Heart left ventricle (tissue), 16 donors: ENCODE measurements at regions of chr15 and their contacts with region 1.

Region 1: DNA sequence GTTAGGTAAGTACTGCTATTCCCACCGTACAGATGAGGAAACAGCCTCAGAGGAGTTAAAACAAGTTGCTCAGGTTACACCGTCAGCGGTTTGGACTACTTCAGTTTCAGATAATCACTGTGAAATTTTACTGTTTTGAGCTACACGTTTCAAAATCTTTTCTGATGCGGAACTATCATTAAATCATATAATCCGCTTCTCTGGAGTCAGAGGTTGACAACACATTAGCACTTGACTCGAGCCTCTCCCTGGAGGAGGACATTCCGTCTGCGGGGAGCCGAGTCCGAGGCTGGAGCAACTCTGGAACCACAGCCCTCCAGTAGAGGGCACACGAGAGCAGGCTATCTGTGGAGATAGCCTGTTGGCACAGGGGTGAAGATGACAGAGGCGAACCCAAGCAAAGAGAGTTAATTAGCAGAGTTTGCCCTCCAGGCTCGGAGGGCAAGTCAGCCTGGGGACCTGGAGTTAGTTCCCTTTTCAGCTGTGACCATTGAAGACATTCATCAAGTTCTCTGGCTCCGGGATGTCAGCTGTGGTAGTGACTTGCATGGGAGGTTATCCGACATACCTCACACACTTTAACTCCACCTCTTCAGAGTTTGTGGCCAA is 131.2 kb downstream of the IGF1R start:
- DNase-seq: peak; percentile 73 to 89 (median 83)
- ATAC-seq: peak; percentile 68 to 91 (median 88)
- H3K4me3 ChIP-seq: no peak overlapping the region
- H3K27ac ChIP-seq: peak overlapping the region in 7 of 12 donors; percentile 13 to 67 (median 30)
- H3K4me1 ChIP-seq: peaks cover 0 to 53% (median 30%) of the 10 kb centered on the region in 12 donors
- H3K27me3 ChIP-seq: no peaks in the 10 kb centered on the region
- CTCF ChIP-seq: peak; percentile 81 to 95 (median 92)
- POLR2A ChIP-seq: no peak

Region 2: DNA sequence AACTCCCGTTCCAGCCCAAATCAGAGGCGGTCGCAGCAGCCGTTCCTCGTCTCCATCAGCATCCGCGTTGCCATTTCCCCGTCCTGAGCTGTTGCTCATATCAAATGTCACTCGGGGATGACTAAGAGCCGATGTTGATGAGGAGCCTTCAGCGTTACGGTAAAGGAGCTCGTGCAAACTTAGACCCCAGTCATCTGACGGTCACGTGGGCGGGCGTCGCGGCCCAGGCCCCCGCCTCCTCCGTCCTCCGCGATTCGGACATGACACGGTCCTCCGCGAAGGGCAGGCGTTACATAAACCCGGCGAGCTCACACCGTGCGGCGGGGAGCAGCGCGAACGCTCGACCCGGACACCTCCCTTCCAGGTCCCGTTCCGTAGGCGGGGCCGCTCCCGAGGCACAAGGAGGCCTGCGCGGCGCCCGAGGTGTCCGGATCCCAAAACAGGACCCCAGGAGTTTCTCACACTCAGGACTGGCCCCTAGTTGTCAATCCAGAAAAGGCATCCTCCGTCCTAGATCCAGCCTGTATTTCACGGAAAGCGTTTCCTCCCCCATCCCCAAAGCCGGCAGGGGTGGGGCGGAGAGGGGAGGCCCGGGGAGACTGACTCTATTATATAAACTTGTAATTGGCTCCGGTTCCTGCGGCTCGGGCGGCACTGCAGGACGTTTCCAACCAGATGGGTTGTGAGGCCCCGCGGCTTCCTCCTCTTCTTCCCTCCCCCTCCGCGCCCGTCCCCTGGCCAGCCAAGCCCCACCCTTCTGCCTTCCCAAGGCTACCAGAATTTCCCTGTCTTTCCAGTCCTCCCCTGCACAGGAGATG is 231.2 kb before region 1 on chr15:
- intact Hi-C with region 1: no loop called
- DNase-seq: peak; percentile 68 to 84 (median 73)
- ATAC-seq: peak; percentile 75 to 92 (median 90)
- H3K4me3 ChIP-seq: peak overlapping the region; percentile 15 to 66 (median 56)
- H3K27ac ChIP-seq: peak overlapping the region in 11 of 12 donors; percentile 22 to 89 (median 71)
- H3K4me1 ChIP-seq: peaks cover 0 to 22% (median 9%) of the 10 kb centered on the region in 12 donors
- H3K27me3 ChIP-seq: peaks cover 0 to 24% (median 10%) of the 10 kb centered on the region in 9 donors
- CTCF ChIP-seq: peak in 4 of 12 donors; percentile 4 to 38 (median 32)
- POLR2A ChIP-seq: no peak

Region 3: GRCh38 chr15:98647774-98648653 is 131.6 kb before region 1 on chr15 and contains the start of gene IGF1R:
- intact Hi-C with region 1: loop called in 8 of 10 experiments (anchors 2 to 5 kb)
- DNase-seq: peak; percentile 88 to 94 (median 91)
- ATAC-seq: peak; percentile 46 to 89 (median 76)
- H3K4me3 ChIP-seq: peak within 1 kb of the TSS; percentile 68 to 93 (median 86)
- H3K27ac ChIP-seq: peak within 1 kb of the TSS; percentile 90 to 97 (median 94)
- H3K4me1 ChIP-seq: peaks cover 0 to 36% (median 19%) of the 10 kb centered on the region in 12 donors
- H3K27me3 ChIP-seq: peaks cover 0 to 68% (median 17%) of the 10 kb centered on the region in 9 donors
- CTCF ChIP-seq: peak in 5 of 12 donors; percentile 2 to 44 (median 19)
- POLR2A ChIP-seq: peak; percentile 35 to 54
- total RNA-seq, gene IGF1R: 26.0 to 93.1 (median 47.5) TPM

Region 4: GRCh38 chr15:98705061-98705460 is 74.5 kb before region 1 on chr15:
- intact Hi-C with region 1: loop called in 1 of 10 experiments (anchors 5 kb)
- DNase-seq: no peak
- ATAC-seq: peak in 2 of 4 donors; percentile 12 to 19
- H3K4me3 ChIP-seq: no peak overlapping the region
- H3K27ac ChIP-seq: peak overlapping the region in 5 of 12 donors; percentile 30 to 56 (median 43)
- H3K4me1 ChIP-seq: peaks cover 0 to 81% (median 59%) of the 10 kb centered on the region in 12 donors
- H3K27me3 ChIP-seq: no peaks in the 10 kb centered on the region
- CTCF ChIP-seq: no peak
- POLR2A ChIP-seq: no peak

Region 5: DNA sequence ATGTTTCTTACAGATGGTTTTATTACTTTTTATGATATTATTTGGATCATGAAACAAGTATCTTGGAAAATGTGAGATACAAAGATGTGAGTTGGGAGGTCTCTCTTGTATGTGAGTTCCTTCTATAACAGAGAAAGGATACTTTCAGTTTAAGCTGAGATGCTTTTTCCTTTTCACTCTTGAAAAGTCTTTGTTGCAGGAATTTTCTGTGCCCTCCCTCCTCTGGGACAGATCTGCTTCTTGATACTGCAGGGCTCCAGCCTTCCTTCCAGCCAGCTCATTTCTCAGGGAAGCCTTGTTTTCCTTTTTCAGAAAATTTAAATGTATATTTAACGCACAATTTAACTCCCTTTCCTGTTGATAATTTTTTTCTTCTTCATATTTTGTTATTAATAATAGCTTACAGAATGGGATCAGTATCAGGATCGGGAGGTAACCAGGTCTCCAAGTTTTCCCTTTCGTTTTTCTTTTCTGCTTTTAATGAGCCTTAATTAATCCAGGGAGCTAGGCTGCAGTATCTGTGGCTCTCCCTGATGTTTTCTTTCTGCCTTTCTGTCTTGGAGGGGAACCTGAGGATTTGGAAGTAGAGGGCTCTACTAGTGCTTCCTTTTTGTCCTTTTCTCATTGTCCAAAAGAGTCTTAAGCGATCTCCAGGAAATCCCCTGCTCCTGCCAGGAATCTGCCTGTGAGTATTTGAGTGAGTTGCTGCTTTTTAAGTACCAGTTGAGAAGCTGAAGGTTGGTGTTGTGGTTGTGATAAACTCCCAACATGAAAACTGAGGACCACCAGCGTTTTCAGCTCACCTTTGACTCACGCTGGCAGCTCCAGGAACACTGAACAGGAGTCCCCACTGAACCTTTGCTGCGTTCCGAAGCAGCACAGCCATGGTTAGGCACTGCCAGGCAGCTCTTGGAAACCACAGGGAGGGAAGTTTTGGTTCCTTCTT is 25.6 kb before region 1 on chr15:
- intact Hi-C with region 1: no loop called
- DNase-seq: no peak
- ATAC-seq: peak in 3 of 4 donors; percentile 51 to 61 (median 57)
- H3K4me3 ChIP-seq: peak overlapping the region in 9 of 12 donors; percentile 3 to 51 (median 35)
- H3K27ac ChIP-seq: peak overlapping the region in 4 of 12 donors; percentile 8 to 50 (median 44)
- H3K4me1 ChIP-seq: peaks cover 0 to 48% (median 24%) of the 10 kb centered on the region in 12 donors
- H3K27me3 ChIP-seq: no peaks in the 10 kb centered on the region
- CTCF ChIP-seq: no peak
- POLR2A ChIP-seq: no peak

Region 6: DNA sequence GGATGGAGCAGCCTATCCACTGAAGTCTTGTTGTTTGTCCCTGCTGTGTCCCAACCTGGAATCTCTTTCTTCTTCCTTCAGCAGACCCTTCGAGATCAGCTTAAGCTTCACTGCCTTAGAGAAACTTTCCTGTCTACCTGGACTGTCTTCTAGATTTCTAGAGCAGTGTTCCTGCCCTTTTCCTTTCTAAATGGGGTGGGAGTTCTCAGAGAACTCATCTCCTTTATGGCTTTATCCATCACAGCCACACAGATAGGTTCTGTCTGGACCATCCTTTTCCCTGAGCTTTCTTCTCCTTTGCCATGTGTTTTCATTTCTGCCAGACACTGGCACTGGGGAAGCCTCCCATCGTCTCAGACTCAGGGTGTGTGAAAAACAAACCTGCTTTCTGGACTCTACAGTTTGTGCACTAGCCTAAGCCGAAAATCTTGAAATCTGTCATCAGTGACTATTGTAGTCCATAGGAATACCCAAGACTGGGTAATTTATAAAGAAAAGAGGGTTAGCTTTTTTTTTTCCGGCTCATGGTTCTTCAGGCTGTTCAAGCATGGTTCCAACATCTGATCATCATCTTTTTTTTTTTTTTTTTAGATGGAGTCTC is 50.6 kb after region 1 on chr15:
- intact Hi-C with region 1: no loop called
- DNase-seq: no peak
- ATAC-seq: no peak
- H3K4me3 ChIP-seq: no peak overlapping the region
- H3K27ac ChIP-seq: no peak overlapping the region
- H3K4me1 ChIP-seq: peaks cover 0 to 3% (median 0%) of the 10 kb centered on the region in 12 donors
- H3K27me3 ChIP-seq: no peaks in the 10 kb centered on the region
- CTCF ChIP-seq: no peak
- POLR2A ChIP-seq: no peak

Region 7: DNA sequence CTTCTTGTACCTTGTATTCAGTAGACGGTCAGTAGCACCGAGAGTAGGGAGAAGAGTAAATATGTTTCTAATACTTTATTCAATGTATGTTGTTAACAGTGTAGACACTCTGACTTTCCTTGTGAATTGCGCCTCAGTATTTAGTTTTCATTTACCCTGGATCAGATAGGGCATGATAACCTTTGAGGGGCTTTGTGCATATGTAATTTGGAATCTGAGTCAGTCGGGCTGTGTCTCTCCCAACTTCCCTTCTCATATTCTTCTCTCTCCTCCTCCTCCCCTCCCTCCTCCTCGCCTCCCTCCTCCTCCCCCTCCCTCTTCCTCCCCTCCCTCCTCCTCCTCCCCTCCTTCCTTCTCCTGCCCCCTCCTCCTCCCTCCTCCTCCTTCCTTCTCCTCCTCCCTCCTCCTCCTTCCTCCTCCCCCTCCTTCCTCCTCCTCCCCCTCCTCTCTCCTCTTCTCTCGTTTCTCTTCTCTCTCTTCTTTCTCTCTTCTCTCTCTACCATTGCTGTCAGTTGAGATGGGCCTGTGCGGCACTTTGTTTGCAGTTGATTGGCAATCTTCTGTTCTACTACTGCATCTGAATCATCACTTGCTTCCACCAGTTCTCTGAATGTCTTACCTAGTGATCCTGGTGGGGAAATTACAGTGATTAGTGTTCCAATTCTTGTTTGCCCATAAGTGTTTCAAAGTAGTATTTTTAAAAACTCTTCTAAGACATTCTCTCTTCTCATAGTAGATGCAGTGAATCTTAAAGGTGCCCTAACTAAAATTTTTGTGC is 65.7 kb after region 1 on chr15:
- intact Hi-C with region 1: loop called in 2 of 10 experiments (anchors 2 to 5 kb)
- DNase-seq: no peak
- ATAC-seq: peak in 2 of 4 donors; percentile 15 to 29
- H3K4me3 ChIP-seq: no peak overlapping the region
- H3K27ac ChIP-seq: no peak overlapping the region
- H3K4me1 ChIP-seq: peaks cover 0 to 59% (median 30%) of the 10 kb centered on the region in 12 donors
- H3K27me3 ChIP-seq: no peaks in the 10 kb centered on the region
- CTCF ChIP-seq: no peak
- POLR2A ChIP-seq: no peak

Region 8: GRCh38 chr15:98856218-98856907 is 76.8 kb after region 1 on chr15:
- intact Hi-C with region 1: no loop called
- DNase-seq: no peak
- ATAC-seq: no peak
- H3K4me3 ChIP-seq: no peak overlapping the region
- H3K27ac ChIP-seq: peak overlapping the region in 2 of 12 donors; percentile 29 to 86
- H3K4me1 ChIP-seq: peaks cover 9 to 74% (median 56%) of the 10 kb centered on the region in 12 donors
- H3K27me3 ChIP-seq: no peaks in the 10 kb centered on the region
- CTCF ChIP-seq: no peak
- POLR2A ChIP-seq: no peak

Region 9: DNA sequence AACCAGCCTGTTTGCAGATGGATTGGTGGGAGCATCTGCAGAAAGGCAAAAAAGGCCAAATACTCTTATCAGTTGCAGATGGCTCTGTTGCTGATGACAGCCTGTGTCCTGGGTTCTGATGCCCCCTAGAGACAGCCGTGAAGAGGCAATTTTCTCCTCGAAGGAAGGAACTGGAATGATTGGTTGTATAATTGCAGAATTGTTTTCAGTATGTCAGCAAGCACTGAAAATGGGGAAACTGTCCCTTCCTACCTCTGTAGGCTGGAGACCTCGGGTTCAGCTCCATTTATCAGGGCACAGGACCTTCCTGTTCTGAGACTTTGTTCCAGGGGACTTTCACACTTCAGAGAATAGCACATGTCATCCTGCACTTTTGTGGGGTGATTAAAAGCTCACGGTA is 125.0 kb after region 1 on chr15:
- intact Hi-C with region 1: loop called in 1 of 10 experiments (anchors 5 kb)
- DNase-seq: no peak
- ATAC-seq: peak in 3 of 4 donors; percentile 3 to 41 (median 36)
- H3K4me3 ChIP-seq: no peak overlapping the region
- H3K27ac ChIP-seq: peak overlapping the region in 1 of 12 donors; percentile 5
- H3K4me1 ChIP-seq: peaks cover 0 to 46% (median 25%) of the 10 kb centered on the region in 12 donors
- H3K27me3 ChIP-seq: no peaks in the 10 kb centered on the region
- CTCF ChIP-seq: peak in 10 of 12 donors; percentile 22 to 59 (median 45)
- POLR2A ChIP-seq: no peak

Region 10: DNA sequence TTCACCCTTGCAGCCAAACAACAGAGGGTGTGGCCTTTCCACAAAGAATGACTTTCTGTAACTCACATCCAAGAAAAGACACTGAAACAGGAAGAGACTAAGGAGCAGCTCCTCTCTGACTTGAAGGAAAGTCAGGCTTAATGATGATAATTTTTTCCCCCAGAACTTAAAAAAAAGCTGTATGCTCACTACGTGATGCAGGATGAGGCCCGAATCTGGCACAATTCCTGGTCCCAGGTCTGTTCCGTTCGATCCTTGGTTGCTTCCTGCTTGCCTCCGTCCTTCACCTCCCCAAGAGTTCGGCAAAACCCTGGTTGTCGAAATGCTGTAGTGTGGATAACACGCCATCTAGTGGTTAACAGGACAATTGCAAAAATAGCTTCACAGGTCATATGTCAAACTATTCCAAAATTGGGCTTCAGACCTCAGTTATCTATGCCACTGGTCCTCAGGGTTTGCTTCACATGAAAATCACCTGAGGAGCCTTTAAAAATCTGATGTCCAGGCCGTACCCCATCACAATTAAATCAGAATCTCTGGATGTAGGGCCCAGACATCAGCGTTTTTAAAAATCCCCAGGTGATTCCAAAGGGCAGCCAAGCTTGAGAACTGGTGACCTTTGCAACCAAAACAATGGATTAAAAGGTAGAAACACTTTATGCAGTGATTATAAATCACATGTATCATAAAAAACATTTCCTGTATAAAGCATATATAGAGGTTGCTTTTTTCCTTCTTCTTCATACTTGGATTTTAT is 297.2 kb after region 1 on chr15:
- intact Hi-C with region 1: loop called in 6 of 10 experiments (anchors 5 to 10 kb)
- DNase-seq: peak in 4 of 5 donors; percentile 60 to 69 (median 64)
- ATAC-seq: peak; percentile 71 to 91 (median 86)
- H3K4me3 ChIP-seq: peak overlapping the region in 10 of 12 donors; percentile 25 to 54 (median 42)
- H3K27ac ChIP-seq: peak overlapping the region in 1 of 12 donors; percentile 47
- H3K4me1 ChIP-seq: peaks cover 0 to 4% (median 0%) of the 10 kb centered on the region in 12 donors
- H3K27me3 ChIP-seq: no peaks in the 10 kb centered on the region
- CTCF ChIP-seq: peak; percentile 76 to 93 (median 86)
- POLR2A ChIP-seq: no peak